Activated naive CD4-positive, alpha-beta T cell treated with anti-CD3 and anti-CD28 coated beads for 36 hours (primary cell): ENCODE measurements at regions of chr17 and their contacts with region 1.

Region 1: GRCh38 chr17:4891411-4892342 is 7.7 kb upstream of the C17orf107 start:
- DNase-seq: no peak
- H3K4me3 Mint-ChIP-seq: no peak overlapping the region
- H3K27ac Mint-ChIP-seq: no peak overlapping the region
- H3K4me1 Mint-ChIP-seq: no peaks in the 10 kb centered on the region
- H3K27me3 Mint-ChIP-seq: no peaks in the 10 kb centered on the region

Region 2: DNA sequence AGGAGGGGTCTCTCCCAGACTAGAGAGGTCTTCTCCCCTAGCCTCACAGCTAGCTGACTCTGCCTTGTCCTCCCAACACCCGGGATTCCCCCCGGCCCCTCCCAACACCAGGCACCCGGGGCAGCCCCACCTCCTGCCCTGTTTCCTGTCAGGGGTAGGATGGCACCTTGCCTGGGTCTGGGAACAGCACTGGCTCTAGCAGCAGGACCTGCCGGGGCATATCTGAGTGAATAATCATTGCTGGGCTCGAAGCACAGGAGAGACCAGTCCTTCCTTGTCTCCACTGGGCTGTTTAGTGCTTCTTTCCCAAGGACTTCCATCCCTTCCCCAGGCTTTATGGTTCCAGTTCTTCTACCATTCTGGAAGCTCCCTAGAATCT is 32.8 kb before region 1 on chr17:
- CTCF ChIA-PET with region 1: no interaction called
- intact Hi-C with region 1: loop called (anchors 2 kb)
- DNase-seq: peak; percentile 47
- H3K4me3 Mint-ChIP-seq: no peak overlapping the region
- H3K27ac Mint-ChIP-seq: no peak overlapping the region
- H3K4me1 Mint-ChIP-seq: peaks cover 14% of the 10 kb centered on the region
- H3K27me3 Mint-ChIP-seq: no peaks in the 10 kb centered on the region